AG04449 (cell line): ENCODE measurements at regions of chr16 and their contacts with region 1.

Region 1: GRCh38 chr16:57413301-57413730 is 8.7 kb downstream of the CCL17 start:
- DNase-seq: no peak
- H3K4me3 ChIP-seq: no peak overlapping the region
- CTCF ChIP-seq: no peak

Region 2: GRCh38 chr16:57300387-57301125 is 112.8 kb before region 1 on chr16:
- CTCF ChIA-PET with region 1: interaction called, 923 read pairs
- POLR2A ChIA-PET with region 1: interaction called, 3 read pairs
- DNase-seq: peak; percentile 90
- H3K4me3 ChIP-seq: peak overlapping the region; percentile 64
- CTCF ChIP-seq: peak; percentile 95

Region 3: GRCh38 chr16:57341441-57342303 is 71.6 kb before region 1 on chr16:
- CTCF ChIA-PET with region 1: interaction called, 17 read pairs
- POLR2A ChIA-PET with region 1: no interaction called
- DNase-seq: peak; percentile 90
- H3K4me3 ChIP-seq: no peak overlapping the region
- CTCF ChIP-seq: no peak

Region 4: DNA sequence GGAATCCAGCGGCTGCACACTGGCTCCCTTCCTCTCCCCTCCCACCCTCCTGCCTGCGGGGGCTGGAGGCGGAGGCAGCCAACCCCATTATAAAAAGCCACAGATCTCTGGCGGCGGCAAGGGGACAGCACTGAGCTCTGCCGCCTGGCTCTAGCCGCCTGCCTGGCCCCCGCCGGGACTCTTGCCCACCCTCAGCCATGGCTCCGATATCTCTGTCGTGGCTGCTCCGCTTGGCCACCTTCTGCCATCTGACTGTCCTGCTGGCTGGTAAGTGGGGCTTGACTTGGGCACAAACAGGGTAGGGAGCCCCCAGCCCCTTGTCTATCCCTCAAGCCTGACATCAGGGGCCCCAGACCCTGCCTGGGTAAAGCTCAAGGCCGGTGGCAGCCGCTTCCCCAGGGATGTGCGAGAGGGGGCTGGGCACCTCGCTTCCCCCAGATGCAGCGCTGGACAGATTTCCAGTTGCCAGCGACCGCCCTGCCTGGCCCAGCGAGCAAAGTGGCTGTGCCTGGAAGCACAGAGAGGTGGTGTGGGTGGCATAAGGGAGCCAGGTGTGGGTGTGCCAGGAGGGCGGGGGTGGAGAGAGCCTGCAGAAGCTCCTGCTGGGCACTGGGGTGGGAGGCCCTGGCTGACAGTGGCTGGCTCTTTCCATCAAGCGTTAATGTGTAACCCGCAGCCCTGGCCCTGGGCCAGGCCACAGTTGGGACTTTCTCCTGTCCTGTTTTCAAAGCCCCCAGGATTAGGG is 40.8 kb before region 1 on chr16 and contains the start of gene CX3CL1:
- CTCF ChIA-PET with region 1: interaction called, 17 read pairs
- POLR2A ChIA-PET with region 1: no interaction called
- DNase-seq: no peak
- H3K4me3 ChIP-seq: no peak within 1 kb of the TSS
- CTCF ChIP-seq: no peak

Region 5: GRCh38 chr16:57394444-57394843 is 18.9 kb before region 1 on chr16:
- CTCF ChIA-PET with region 1: interaction called, 23 read pairs
- POLR2A ChIA-PET with region 1: no interaction called
- DNase-seq: no peak
- H3K4me3 ChIP-seq: no peak overlapping the region
- CTCF ChIP-seq: no peak

Region 6: GRCh38 chr16:57432989-57433388 is 19.7 kb after region 1 on chr16:
- CTCF ChIA-PET with region 1: interaction called, 185 read pairs
- POLR2A ChIA-PET with region 1: no interaction called
- DNase-seq: no peak
- H3K4me3 ChIP-seq: no peak overlapping the region
- CTCF ChIP-seq: no peak